HepG2 (cell line): ENCODE measurements at regions of chr2 and their contacts with region 1.

Region 1: GRCh38 chr2:42047488-42048298 is at the start of gene PKDCC:
- DNase-seq: peak; percentile 75
- ATAC-seq: peak; percentile 72
- H3K4me3 ChIP-seq: peak within 1 kb of the TSS; percentile 82 to 95 (median 90)
- H3K27ac ChIP-seq: peak within 1 kb of the TSS; percentile 51
- H3K4me1 ChIP-seq: peaks cover 67% of the 10 kb centered on the region
- H3K27me3 ChIP-seq: peaks cover 0 to 37% of the 10 kb centered on the region in 2 experiments; a peak in 2 of 5 replicates
- CTCF ChIP-seq: no peak
- EP300 ChIP-seq: no peak
- POLR2A ChIP-seq: 0 out of 4 replicates have a peak, but pooled peaks of 1 of the 2 experiments have one; percentile 22
- RAD21 ChIP-seq: peak; percentile 33; the same call in 1 of the 2 replicates
- total RNA-seq, gene PKDCC: 28.5 and 52.6 TPM in 2 replicates

Region 2: DNA sequence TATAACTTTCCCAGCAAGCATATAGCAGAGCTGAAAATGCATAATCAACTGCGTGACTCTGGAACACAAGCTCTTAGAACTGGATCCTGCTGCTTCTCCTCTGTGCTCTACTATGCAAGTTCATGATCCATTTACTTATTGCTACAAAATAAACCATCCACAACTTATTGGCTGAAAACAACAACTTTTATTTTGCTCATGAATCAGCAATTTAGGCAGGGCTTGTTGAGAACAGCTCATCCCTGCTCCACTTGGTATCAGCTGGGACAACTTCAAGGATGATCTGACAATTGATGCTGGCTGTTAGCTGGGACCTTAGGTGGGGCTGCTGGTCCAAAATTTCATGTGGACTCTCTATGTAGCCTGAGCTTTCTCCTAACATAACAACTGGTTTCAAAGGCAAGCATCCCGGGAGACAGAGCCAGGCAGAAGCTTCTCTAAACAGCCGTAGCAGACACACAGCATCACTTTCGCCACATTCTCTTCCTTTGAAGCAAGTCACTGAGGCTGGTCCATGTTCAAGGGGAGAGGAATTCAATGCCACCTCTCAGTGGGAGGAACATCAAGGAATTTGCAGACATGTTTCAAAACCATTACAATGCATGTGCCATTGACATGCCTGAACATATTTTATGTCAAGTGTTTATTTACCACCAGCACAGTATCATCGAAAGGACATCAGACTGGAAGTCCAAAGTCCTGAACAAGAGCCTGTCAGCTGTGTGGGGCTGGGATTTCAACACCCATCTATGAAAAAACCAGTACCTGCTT is 152.9 kb before region 1 on chr2:
- CTCF ChIA-PET with region 1: no interaction called
- POLR2A ChIA-PET with region 1: interaction called, 18 read pairs
- in situ Hi-C with region 1: no loop called
- intact Hi-C with region 1: no loop called
- DNase-seq: peak; percentile 92
- ATAC-seq: peak; percentile 93
- H3K4me3 ChIP-seq: no peak overlapping the region
- H3K27ac ChIP-seq: peak overlapping the region; percentile 20
- H3K4me1 ChIP-seq: peaks cover 25% of the 10 kb centered on the region
- H3K27me3 ChIP-seq: peaks cover 0 to 14% of the 10 kb centered on the region in 2 experiments; a peak in 3 of 5 replicates
- CTCF ChIP-seq: no peak
- EP300 ChIP-seq: peak; percentile 64 to 84
- POLR2A ChIP-seq: no peak
- RAD21 ChIP-seq: no peak

Region 3: DNA sequence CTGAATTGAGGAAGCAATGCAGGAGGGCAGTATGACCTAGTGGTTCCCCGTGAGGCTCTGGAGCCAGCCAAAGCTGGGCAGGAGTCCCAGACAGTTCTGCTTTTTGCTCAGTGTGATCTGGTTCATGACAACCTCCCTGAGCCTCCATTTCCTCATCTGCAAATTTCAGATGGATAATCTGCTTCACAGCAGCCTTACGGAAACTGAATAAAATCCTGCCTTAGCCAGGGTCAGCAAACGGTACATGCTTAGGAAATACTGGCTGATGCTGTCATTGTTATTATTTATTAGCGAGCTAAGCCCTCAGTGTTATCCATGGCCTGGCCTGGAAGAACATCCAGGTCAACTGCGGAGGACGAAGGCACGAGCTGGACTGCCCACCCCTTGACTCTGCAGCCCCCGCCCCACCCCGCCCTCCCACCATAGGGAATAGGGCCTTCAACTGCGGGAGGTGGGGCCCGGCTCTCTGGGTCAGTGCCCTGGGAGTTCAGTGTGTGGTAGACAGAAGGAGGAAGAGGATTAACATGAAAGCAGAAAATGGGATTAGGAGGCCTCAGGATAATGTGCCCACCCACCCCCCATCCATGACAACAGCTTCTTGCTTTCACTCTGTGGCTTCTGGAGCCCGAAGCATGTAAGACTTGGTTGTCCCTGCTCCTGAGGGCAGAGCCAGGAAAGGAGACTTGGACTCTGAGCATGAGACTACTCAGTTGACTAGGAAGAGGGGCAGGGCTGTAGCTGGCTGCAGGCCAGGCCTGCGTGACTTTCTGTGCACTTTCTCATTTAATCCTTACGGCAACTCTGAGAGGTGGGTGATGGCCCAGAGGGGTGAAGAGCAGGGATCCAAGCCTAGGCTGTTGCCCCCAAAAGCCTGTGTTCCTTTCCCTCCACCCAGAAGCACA is 13.3 kb after region 1 on chr2:
- CTCF ChIA-PET with region 1: no interaction called
- POLR2A ChIA-PET with region 1: interaction called, 203 read pairs
- in situ Hi-C with region 1: no loop called
- intact Hi-C with region 1: loop called (anchors 1 kb)
- DNase-seq: no peak
- ATAC-seq: peak; percentile 58
- H3K4me3 ChIP-seq: peak overlapping the region in 1 of 3 experiments; percentile 29; a peak in 1 of 6 replicates
- H3K27ac ChIP-seq: no peak overlapping the region
- H3K4me1 ChIP-seq: peaks cover 75% of the 10 kb centered on the region
- H3K27me3 ChIP-seq: no peaks in the 10 kb centered on the region
- CTCF ChIP-seq: no peak
- EP300 ChIP-seq: no peak
- POLR2A ChIP-seq: 0 out of 4 replicates have a peak, but pooled peaks of 1 of the 2 experiments have one; percentile 7
- RAD21 ChIP-seq: no peak

Region 4: DNA sequence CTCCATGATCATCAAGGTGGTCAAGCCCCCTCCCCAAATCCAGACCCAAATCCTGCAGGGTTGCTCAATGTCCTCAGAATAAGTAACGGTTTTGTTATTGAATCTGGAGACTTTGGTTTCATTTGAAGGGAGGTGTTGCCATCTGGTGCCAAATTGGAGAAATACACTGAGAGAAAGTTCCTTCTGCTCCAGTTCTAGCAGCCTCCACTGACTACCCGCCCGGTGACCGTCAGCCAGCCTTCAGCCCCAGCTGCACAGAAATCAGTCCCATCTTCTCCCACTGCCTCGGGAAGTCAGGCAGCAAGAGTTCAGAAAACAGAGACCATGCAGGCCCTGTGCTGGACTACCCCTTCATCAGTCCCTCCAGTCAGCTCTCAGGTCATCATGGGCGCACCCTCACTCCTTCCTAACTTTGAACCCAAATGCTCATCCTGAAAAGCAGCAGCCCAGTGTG is 38.8 kb after region 1 on chr2:
- CTCF ChIA-PET with region 1: interaction called, 3 read pairs
- POLR2A ChIA-PET with region 1: interaction called, 29 read pairs
- in situ Hi-C with region 1: no loop called
- intact Hi-C with region 1: no loop called
- DNase-seq: peak; percentile 76
- ATAC-seq: peak; percentile 89
- H3K4me3 ChIP-seq: peak overlapping the region; percentile 6 to 51 (median 20); a peak in 3 of 6 replicates
- H3K27ac ChIP-seq: no peak overlapping the region
- H3K4me1 ChIP-seq: peaks cover 65% of the 10 kb centered on the region
- H3K27me3 ChIP-seq: peaks cover 0 to 6% of the 10 kb centered on the region in 2 experiments; a peak in 1 of 5 replicates
- CTCF ChIP-seq: peak; percentile 94
- EP300 ChIP-seq: no peak
- POLR2A ChIP-seq: no peak
- RAD21 ChIP-seq: peak; percentile 97

Region 5: DNA sequence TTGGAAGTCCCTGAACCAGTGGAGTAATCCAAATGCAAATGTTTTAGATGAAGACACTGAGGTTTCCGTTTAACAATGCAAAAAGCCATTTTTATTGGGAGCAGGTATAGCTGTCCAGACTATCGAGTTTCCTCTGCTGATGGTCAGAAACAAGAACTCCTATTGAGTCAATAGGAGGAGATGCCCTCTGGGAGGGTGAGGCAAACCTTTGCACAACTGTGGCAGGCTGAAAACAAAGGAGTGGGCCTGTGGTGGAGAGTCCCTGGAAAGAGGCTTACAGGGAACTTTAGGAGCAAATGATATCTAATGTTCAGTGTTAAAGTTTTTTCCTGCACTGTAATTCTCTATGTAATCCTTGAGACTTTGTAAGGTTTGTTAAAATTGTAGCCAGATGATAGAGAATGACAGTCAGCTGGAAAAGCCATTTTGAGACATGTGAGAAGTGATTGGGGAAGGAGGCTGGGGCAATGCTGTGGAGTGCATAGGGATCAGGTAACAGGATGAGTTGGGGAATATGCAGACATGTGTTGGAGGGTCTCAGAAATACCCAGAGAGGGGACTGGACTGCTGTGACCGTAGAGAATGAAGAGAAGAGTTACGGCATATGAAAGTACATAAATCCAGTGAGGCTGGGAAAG is 106.4 kb after region 1 on chr2:
- CTCF ChIA-PET with region 1: no interaction called
- POLR2A ChIA-PET with region 1: no interaction called
- in situ Hi-C with region 1: no loop called
- intact Hi-C with region 1: no loop called
- DNase-seq: no peak
- ATAC-seq: peak; percentile 84
- H3K4me3 ChIP-seq: no peak overlapping the region
- H3K27ac ChIP-seq: peak overlapping the region; percentile 13
- H3K4me1 ChIP-seq: peaks cover 27% of the 10 kb centered on the region
- H3K27me3 ChIP-seq: no peaks in the 10 kb centered on the region
- CTCF ChIP-seq: no peak
- EP300 ChIP-seq: no peak
- POLR2A ChIP-seq: no peak
- RAD21 ChIP-seq: no peak